CD8-positive, alpha-beta T cell (primary cell): ENCODE measurements at regions of chr16 and their contacts with region 1.

Region 1: DNA sequence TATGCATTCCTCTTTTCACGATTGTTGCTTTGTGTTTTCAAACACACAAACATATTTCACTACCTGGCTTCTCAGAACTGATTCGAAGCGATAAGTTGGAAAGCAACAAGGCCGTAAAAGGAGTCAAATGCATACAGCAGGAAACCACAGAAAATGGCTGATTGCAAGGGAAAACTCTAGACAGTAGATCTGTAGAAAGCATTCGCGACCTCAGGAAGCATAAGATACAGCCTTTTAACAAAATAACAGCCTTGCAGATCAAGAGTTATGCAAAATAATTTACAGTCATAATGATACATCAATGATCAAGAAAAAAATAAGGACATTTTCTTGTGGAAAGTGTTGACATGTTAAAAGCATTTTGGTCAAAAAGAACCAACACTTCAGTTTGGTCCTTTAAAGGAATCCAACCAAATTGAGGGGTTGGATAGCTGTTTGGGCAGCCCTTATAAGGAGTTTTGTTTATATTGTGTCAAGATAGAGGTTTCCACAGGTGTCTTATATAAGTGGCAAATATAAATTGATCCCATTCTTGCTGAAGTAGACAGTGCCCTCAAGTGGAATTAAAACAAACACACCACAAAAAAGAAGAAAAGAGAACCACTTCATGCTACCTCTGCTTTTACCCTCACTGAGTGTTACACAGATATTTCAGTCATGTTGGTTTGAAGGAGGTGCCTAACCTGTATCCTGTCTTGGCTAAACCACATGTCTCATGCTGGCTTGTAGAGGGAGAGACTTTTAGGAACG is 5.5 kb downstream of the CYLD start:
- DNase-seq: peak in 3 of 9 experiments; percentile 21 to 80 (median 67)
- ATAC-seq: peak; percentile 68
- H3K4me3 ChIP-seq: peak overlapping the region; percentile 12 to 23
- H3K4me3 Mint-ChIP-seq: peak overlapping the region; percentile 80
- H3K27ac ChIP-seq: peak overlapping the region; percentile 47 to 99
- H3K27ac Mint-ChIP-seq: peak overlapping the region; percentile 94
- H3K4me1 ChIP-seq: peaks cover 65% of the 10 kb centered on the region
- H3K4me1 Mint-ChIP-seq: peaks cover 71% of the 10 kb centered on the region
- H3K27me3 ChIP-seq: no peaks in the 10 kb centered on the region
- H3K27me3 Mint-ChIP-seq: no peaks in the 10 kb centered on the region
- CTCF ChIP-seq: peak; percentile 67

Region 2: DNA sequence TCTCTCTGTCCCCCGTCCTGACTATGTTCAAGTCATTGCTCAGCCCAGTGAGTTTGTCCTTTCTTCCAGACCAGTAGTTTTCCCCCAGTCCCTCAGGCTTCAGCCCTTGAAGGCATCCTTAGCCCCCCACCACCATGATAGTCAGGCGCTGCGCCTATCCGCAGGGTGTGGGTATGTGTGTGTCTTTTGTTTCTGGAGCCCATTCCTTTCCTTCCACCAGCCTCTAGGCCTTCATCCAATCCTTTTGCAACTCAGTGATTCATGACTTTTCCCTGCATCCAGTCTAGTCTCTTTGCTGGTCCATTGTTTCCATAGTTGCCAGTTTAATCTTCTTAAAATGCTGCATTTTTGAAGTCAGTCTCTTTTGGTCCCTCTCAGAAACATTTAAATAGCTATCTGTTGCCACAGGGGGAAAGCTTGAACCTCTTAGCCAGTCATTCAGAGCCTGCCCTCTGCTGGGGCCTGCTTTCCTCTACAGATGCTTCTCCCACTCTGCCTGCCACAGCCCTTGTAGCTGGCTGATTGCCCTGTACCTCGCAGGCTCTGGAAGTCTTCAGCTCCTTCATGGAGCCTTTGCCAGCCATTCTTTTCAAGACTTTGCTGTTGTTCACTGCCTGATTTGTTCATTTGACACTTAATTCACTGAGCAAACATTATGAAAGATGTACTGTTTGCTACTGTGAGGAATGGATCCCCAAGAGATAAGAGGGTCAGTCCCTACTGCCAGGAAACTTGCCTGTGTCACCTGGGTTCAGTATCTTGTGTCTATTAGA is 536.9 kb before region 1 on chr16:
- CTCF ChIA-PET with region 1: interaction called, 3 read pairs
- POLR2A ChIA-PET with region 1: no interaction called
- intact Hi-C with region 1: loop called (anchors 2 to 5 kb)
- DNase-seq: peak; percentile 34 to 76 (median 60)
- ATAC-seq: peak; percentile 90
- H3K4me3 ChIP-seq: no peak overlapping the region
- H3K4me3 Mint-ChIP-seq: no peak overlapping the region
- H3K27ac ChIP-seq: no peak overlapping the region
- H3K27ac Mint-ChIP-seq: peak overlapping the region; percentile 72
- H3K4me1 ChIP-seq: peaks cover 3% of the 10 kb centered on the region
- H3K4me1 Mint-ChIP-seq: peaks cover 39% of the 10 kb centered on the region
- H3K27me3 ChIP-seq: no peaks in the 10 kb centered on the region
- H3K27me3 Mint-ChIP-seq: no peaks in the 10 kb centered on the region
- CTCF ChIP-seq: peak; percentile 61

Region 3: GRCh38 chr16:50354629-50355456 is 392.5 kb before region 1 on chr16:
- CTCF ChIA-PET with region 1: interaction called, 5 read pairs
- POLR2A ChIA-PET with region 1: no interaction called
- intact Hi-C with region 1: loop called in 1 of 2 experiments (anchors 5 kb)
- DNase-seq: peak in 2 of 9 experiments; percentile 40 to 56
- ATAC-seq: peak; percentile 47
- H3K4me3 ChIP-seq: no peak overlapping the region
- H3K4me3 Mint-ChIP-seq: no peak overlapping the region
- H3K27ac ChIP-seq: no peak overlapping the region
- H3K27ac Mint-ChIP-seq: peak overlapping the region; percentile 60
- H3K4me1 ChIP-seq: no peaks in the 10 kb centered on the region
- H3K4me1 Mint-ChIP-seq: peaks cover 38% of the 10 kb centered on the region
- H3K27me3 ChIP-seq: no peaks in the 10 kb centered on the region
- H3K27me3 Mint-ChIP-seq: no peaks in the 10 kb centered on the region
- CTCF ChIP-seq: peak; percentile 94

Region 4: DNA sequence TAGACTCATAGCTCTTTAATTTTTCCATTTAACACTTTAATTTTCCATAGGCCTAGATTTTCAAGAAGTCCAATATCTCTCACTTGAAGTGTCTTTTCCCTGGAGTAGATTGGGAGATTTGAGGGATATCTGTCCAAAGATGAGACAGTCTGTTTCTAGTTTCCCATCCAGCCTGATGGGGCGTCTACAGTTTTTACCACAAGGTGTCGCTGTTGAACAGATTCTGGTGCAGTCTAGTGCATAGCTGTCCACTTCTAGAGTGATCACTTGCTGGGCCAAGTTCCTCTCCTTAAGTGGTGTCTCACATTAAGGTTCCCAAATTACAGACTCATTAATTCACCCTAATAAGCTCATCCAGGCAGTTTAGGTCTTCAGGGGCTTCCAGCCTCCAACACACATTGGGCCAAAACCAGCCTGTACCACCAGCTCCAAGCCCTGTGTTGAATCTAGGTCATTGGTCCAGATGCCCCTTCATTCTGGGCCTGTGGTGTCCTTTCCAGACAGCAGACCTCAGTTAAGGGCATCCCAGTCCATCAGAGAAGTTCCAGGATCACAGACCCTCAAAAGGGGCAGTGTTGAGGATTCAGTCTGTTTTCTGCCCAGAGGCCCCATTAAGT is 75.6 kb before region 1 on chr16:
- CTCF ChIA-PET with region 1: interaction called, 117 read pairs
- POLR2A ChIA-PET with region 1: interaction called, 8 read pairs
- intact Hi-C with region 1: loop called in 1 of 2 experiments (anchors 1 kb)
- DNase-seq: peak in 6 of 9 experiments; percentile 21 to 69 (median 52)
- ATAC-seq: peak; percentile 24
- H3K4me3 ChIP-seq: no peak overlapping the region
- H3K4me3 Mint-ChIP-seq: no peak overlapping the region
- H3K27ac ChIP-seq: no peak overlapping the region
- H3K27ac Mint-ChIP-seq: peak overlapping the region; percentile 75
- H3K4me1 ChIP-seq: peaks cover 11% of the 10 kb centered on the region
- H3K4me1 Mint-ChIP-seq: peaks cover 26% of the 10 kb centered on the region
- H3K27me3 ChIP-seq: no peaks in the 10 kb centered on the region
- H3K27me3 Mint-ChIP-seq: no peaks in the 10 kb centered on the region
- CTCF ChIP-seq: peak; percentile 59

Region 5: DNA sequence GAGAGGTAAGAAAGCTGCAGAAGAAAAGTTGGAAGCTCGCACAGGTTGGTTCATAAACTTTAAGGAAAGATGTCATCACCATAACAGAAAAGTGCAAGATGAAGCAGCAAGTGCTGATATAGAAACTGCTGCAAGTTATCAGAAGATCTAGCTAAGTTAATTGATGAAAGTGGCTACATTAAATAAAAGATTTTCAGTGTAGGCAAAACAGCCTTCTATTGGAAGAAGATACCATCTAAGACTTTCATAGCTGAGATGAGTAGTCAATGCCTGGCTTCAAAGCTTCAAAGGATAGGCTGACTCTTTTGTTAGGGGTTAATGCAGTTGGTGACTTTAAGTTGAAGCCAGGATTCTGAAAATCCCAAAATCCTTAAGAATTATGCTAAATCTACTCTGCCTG is 18.5 kb after region 1 on chr16:
- CTCF ChIA-PET with region 1: interaction called, 3 read pairs
- POLR2A ChIA-PET with region 1: interaction called, 5 read pairs
- intact Hi-C with region 1: loop called in 1 of 2 experiments (anchors 2 kb)
- DNase-seq: no peak
- ATAC-seq: no peak
- H3K4me3 ChIP-seq: no peak overlapping the region
- H3K4me3 Mint-ChIP-seq: no peak overlapping the region
- H3K27ac ChIP-seq: no peak overlapping the region
- H3K27ac Mint-ChIP-seq: no peak overlapping the region
- H3K4me1 ChIP-seq: peaks cover 58% of the 10 kb centered on the region
- H3K4me1 Mint-ChIP-seq: peaks cover 91% of the 10 kb centered on the region
- H3K27me3 ChIP-seq: no peaks in the 10 kb centered on the region
- H3K27me3 Mint-ChIP-seq: no peaks in the 10 kb centered on the region
- CTCF ChIP-seq: no peak